ENCODE measurements at regions of chr9 and their contacts with region 1.

Region 1: DNA sequence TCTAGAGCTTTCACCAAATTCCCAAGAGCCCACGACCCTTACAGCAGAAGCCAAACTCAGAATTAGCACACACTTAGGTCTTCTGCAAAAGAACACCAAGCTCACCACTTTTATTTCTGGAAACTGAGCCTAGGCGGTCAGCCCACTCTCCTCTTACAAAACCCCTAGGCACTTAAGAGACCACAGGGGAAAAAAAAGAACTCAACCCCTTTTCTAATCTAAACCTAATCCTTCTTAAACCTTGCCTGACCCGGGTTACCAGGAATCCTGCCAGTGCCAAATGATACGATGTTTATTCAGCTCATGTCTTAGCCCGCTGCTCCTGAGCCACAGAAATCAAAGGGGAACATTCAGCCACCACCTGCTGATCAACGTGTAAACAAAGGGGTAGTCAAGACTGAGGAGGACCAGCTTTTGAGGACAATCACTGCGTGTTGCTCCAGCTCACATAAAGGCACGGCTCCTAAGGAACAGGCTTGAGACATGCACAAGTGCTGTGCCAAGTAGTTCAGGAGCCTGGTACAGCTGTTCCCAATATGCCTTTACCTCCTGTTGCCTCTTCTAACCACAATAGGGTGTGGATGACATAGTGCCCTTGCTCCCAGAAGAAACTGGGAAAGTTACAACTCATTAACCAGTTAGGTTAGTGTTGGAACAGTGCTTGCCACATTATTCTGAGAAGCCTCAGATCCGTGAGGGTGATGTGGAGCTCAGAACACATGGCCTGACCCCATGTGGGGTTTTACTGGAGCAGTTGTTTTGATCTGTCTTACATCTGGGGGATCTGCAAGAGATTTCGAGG is 49.3 kb downstream of the ZFAND5 start:
- DNase-seq: peak; percentile 68 to 92
- H3K4me3 ChIP-seq: peak overlapping the region; percentile 36; the same call in 1 of the 2 replicates
- H3K27ac ChIP-seq: peak overlapping the region; percentile 70
- H3K4me1 ChIP-seq: peaks cover 39% of the 10 kb centered on the region
- H3K27me3 ChIP-seq: no peaks in the 10 kb centered on the region
- CTCF ChIP-seq: no peak

Region 2: DNA sequence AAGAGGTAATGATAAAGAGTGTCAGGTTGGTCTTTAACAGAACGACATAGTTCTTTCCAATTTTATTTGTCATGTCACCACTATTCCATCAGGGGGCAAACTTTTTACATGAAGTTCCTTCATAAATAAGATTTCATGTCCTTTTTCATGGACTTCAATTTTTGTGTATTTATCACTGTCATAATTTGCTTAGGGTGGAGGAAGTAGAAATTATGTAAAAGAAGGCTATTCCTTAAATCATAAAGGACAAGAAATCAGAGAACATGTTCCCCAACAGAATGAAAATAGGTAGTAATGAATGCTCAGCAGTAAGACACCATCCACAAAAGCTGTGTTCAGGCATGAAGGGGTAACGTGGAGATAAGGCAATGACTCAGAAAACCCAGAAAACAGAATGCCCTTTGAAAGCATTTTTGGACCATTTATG is 23.4 kb before region 1 on chr9:
- CTCF ChIA-PET with region 1: no interaction called
- POLR2A ChIA-PET with region 1: interaction called, 19 read pairs
- intact Hi-C with region 1: no loop called
- DNase-seq: no peak
- H3K4me3 ChIP-seq: no peak overlapping the region
- H3K27ac ChIP-seq: no peak overlapping the region
- H3K4me1 ChIP-seq: peaks cover 26% of the 10 kb centered on the region
- H3K27me3 ChIP-seq: no peaks in the 10 kb centered on the region
- CTCF ChIP-seq: peak; percentile 71

Region 3: GRCh38 chr9:72351538-72352453 is 36.1 kb after region 1 on chr9:
- CTCF ChIA-PET with region 1: interaction called, 3 read pairs
- POLR2A ChIA-PET with region 1: interaction called, 12 read pairs
- intact Hi-C with region 1: no loop called
- DNase-seq: peak; percentile 28 to 66
- H3K4me3 ChIP-seq: no peak overlapping the region
- H3K27ac ChIP-seq: peak overlapping the region; percentile 16
- H3K4me1 ChIP-seq: 0 out of 2 replicates have a peak, but pooled peaks cover 9% of the 10 kb centered on the region
- H3K27me3 ChIP-seq: no peaks in the 10 kb centered on the region
- CTCF ChIP-seq: no peak

Region 4: GRCh38 chr9:72540348-72540873 is 224.7 kb after region 1 on chr9:
- CTCF ChIA-PET with region 1: no interaction called
- POLR2A ChIA-PET with region 1: no interaction called
- intact Hi-C with region 1: loop called (anchors 5 kb)
- DNase-seq: peak; percentile 43 to 60
- H3K4me3 ChIP-seq: no peak overlapping the region
- H3K27ac ChIP-seq: peak overlapping the region; percentile 42
- H3K4me1 ChIP-seq: peaks cover 54% of the 10 kb centered on the region
- H3K27me3 ChIP-seq: no peaks in the 10 kb centered on the region
- CTCF ChIP-seq: no peak

Region 5: DNA sequence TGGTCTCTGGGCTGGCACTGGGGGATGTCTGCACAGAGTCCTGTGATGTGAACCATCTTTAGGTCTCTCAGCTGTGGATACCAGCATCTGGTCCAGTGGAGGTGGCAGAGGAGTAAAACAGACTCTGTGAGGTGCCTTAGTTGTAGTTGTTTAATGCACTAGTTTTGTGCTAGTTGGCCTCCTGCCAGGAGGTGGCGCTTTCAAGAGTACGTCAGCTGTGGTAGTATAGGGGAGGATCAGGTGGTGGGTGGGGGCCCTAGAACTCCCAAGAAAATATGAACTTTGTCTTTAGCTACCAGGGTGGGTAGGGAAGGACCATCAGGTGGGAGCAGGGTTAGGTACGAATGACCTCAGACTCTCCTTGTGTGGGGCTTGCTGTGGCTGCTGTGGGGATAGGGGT is 402.8 kb after region 1 on chr9:
- CTCF ChIA-PET with region 1: no interaction called
- POLR2A ChIA-PET with region 1: no interaction called
- intact Hi-C with region 1: no loop called
- DNase-seq: no peak
- H3K4me3 ChIP-seq: no peak overlapping the region
- H3K27ac ChIP-seq: no peak overlapping the region
- H3K4me1 ChIP-seq: no peaks in the 10 kb centered on the region
- H3K27me3 ChIP-seq: no peaks in the 10 kb centered on the region
- CTCF ChIP-seq: no peak